ENCODE measurements at regions of chr6 and their contacts with region 1.

Region 1: DNA sequence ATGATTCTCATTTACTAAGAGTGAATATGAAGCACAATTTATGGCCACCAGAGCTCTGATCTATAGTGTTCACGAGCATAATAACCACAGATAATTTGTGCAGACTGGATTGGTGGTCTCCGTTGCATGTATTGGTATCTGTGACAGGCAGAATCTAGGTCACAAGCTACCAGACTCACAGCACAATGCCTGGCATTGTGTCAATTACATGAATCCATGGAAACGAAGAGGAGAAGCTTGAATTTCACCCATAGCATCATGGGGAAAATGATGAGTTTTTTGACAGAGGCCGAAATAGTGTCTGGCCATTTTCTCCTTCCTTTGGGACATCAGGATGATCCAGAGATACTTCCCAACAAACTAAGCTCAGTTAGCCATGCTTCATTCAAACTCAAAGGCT is 52.3 kb upstream of the TMEM170B start:
- DNase-seq: peak; percentile 87

Region 2: GRCh38 chr6:11251541-11252360 is 233.5 kb before region 1 on chr6:
- in situ Hi-C with region 1: loop called (anchors 10 kb)
- DNase-seq: peak; percentile 99

Region 3: DNA sequence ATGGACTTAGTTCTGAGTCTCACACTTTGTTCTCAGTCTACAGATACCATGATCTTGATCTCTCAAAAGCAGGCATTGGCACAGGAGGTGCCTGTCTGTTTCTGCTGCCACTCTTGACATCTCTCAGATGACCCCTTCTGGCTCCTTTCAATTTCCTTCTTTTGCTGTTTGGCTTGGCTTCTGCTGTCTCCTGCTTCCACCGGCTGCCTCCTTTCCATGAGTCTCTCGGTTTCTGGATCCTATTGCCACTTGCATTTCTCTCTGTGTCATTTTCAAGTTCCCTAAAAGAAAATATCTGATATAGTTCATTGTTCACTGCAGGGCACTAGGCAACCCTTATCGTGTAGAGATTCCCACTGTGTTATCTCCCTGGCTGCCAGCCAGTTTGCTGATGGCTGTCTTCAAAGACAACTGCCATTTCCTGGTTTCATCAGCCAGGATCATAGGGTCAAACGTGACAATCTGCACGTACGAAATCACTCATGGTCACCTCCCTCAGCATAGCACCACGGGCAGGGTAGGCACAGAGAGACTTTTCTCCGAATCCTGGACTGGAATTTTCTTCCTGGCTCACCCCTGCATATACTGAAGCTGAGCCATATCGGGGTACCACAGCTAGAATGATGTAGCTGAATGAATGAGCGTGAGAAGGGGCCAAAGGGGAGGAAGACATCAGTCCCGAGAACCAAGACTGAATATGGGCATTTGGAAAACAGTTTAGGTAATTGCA is 92.3 kb before region 1 on chr6:
- in situ Hi-C with region 1: no loop called
- DNase-seq: no peak